ENCODE measurements at regions of chr1 and their contacts with region 1.

Region 1: DNA sequence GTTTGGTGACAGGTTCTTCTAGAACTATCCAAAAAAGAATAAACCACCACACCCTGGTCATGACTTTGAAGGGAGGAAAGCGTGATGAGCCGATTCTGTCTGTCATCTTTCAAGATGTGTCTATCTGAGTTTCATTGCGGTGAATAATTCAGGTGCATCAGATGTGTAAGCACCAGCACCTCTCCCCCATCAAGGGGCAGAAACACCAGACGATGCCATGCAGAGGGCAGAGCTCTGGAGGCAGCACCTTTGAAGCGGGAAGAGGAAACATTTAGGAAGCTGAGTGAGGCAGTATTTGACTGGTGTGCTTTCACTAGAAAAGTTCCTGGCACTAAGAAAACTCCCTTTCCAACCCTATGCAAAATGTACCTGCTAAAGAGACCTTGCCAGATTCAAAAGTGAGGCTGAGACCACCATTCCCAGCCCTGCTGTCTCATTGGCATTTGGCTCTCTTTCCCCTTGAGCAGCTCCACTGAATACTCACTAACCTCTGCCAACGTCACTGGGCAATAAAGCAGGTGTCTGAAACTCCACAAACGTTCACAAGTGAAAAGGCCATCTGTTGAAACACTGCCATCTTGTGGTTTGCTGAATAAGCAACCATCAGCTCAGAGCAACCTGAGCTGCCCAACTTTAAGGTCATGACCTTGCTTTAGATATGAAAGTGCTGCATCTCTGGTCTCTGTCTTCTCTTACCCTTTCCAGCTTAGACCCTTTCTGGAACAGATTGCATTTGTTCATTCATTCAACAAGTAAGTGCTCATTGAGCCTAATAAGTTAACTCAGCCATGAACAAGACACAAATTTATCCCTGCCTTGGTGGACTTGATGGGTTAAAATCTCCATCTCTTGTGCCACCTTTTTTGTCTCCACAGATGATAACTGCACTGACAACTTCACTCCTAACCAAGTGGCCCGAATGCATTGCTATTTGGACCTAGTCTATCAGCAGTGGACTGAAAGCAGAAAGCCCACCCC is 228.6 kb downstream of the PAPPA2 start:
- DNase-seq: no peak
- ATAC-seq: peak; percentile 67 to 82 (median 76)
- H3K4me3 ChIP-seq: no peak overlapping the region
- H3K27ac ChIP-seq: peak overlapping the region; percentile 81
- H3K4me1 ChIP-seq: peaks cover 44% of the 10 kb centered on the region
- H3K27me3 ChIP-seq: no peaks in the 10 kb centered on the region
- CTCF ChIP-seq: peak; percentile 65

Region 2: DNA sequence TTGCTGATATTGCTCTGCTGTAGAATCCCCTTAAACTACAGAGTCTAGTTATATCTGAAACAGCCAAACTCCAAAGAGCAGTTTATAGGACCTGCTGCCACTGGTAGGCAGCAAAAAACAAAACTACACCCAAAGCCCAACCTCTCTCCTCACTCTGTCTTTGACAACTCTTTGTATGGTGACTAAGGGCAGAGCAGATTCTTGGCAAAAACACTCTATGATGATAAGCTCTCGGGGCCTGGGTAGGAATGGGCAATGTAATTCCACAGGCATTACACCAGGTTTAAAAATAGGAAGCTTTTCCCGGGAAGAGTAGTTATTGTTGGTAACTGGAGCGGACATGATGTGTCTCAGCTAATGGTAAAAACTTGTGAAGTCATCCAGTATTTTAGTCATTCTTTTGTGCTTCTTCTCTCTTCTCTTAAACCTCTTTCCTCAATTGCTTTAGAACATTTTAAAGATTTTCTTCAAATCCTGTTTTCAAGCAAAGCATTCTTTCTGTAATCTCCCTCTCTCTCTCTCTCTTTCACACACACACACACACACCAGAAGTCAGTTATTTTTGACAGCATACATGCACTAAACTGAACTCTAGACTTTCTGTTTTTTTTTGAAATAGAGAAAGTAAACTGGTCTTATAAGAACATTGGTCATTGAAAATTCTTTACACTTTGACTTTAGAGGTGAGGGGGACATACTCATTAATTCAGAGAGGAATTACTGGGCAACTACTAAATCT is 35.1 kb before region 1 on chr1:
- intact Hi-C with region 1: loop called in 1 of 2 experiments (anchors 1 kb)
- DNase-seq: no peak
- ATAC-seq: peak; percentile 97 to 99 (median 98)
- H3K4me3 ChIP-seq: no peak overlapping the region
- H3K27ac ChIP-seq: peak overlapping the region; percentile 72
- H3K4me1 ChIP-seq: no peaks in the 10 kb centered on the region
- H3K27me3 ChIP-seq: no peaks in the 10 kb centered on the region
- CTCF ChIP-seq: peak; percentile 35

Region 3: DNA sequence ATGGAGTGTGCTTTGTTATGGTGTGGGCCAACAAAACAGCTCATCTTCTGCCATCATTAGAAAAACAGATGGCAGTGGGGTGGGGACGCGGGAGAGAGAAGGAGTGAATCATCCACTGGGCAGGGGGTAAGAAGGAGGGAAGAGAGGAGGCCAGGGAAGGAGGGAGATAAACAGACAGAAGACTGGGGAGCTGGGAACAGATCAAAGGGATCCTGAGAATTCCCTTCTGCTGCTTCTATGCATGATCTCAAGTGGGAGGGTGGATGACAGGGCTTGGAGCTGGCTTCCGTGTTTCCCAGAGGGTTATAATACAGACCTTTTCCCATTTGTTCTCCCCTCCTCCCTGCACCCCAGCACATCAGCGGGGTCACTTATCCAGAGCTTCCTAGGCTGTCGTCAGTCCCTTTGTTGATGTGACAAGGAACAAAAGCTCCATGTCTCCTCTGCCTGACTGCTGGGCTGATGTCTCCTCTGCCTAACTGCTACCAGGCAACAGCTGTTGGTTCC is 110.0 kb after region 1 on chr1:
- intact Hi-C with region 1: no loop called
- DNase-seq: peak in 1 of 2 donors; percentile 15
- ATAC-seq: peak in 3 of 4 donors; percentile 30 to 40 (median 36)
- H3K4me3 ChIP-seq: no peak overlapping the region
- H3K27ac ChIP-seq: no peak overlapping the region
- H3K4me1 ChIP-seq: no peaks in the 10 kb centered on the region
- H3K27me3 ChIP-seq: no peaks in the 10 kb centered on the region
- CTCF ChIP-seq: no peak

Measured in psoas muscle (tissue), 8 donors.